ENCODE measurements at regions of chr6 and their contacts with region 1.

Region 1: DNA sequence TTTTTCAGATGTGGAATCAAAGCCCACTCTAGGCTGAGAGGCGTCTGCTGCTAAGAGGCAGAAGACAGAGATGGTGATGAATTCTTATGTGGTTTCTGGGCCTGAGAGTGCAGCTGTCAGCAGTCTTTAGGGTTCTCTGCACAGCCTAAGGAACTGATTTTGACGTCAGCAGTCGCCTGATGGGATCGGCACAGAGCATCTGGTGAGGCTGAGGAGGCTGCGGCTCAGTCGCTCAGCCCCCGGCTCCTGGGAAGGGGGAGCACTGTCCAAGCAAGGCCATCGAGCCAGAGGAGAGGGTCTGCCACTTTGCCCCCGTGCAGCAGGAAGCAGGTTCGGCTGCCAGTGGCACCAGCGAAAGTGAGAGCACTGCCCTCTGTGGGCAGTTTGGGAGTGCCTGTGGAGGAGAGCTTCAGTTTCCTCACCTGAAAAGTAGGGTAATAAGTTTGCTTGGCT is 92.5 kb downstream of the TCP11 start:
- DNase-seq: peak; percentile 42
- ATAC-seq: peak; percentile 43
- H3K4me3 Mint-ChIP-seq: no peak overlapping the region
- H3K27ac Mint-ChIP-seq: no peak overlapping the region
- H3K4me1 Mint-ChIP-seq: no peaks in the 10 kb centered on the region
- H3K27me3 Mint-ChIP-seq: no peaks in the 10 kb centered on the region
- CTCF ChIP-seq: no peak

Region 2: DNA sequence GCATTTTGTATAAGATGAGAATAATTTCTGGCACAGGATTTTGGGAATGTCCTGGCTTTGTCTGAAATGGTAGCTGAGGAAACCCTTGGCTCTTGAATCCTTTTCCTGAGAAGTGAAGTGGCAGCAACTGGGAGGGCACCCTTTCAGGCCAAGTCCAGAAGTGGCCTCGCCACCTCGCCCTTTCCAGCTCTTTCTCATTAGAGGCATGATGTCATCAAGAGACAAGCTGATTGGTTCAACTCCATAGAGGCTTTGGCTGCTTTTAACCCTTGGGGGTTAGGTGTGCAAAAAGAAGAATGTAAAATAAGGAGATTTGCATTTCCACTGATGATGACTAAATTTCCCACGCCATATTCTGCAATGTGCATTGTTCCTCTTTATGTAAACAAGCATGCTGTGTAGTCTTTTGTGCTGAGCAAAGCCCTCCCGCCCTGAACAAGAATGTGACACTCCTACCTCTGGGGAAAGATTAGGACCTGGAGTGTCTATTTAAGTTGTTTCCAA is 24.1 kb before region 1 on chr6:
- CTCF ChIA-PET with region 1: interaction called, 19 read pairs
- POLR2A ChIA-PET with region 1: interaction called, 4 read pairs
- DNase-seq: no peak
- ATAC-seq: peak; percentile 59
- H3K4me3 Mint-ChIP-seq: peak overlapping the region; percentile 35
- H3K27ac Mint-ChIP-seq: peak overlapping the region; percentile 29
- H3K4me1 Mint-ChIP-seq: peaks cover 78% of the 10 kb centered on the region
- H3K27me3 Mint-ChIP-seq: no peaks in the 10 kb centered on the region
- CTCF ChIP-seq: no peak

Region 3: DNA sequence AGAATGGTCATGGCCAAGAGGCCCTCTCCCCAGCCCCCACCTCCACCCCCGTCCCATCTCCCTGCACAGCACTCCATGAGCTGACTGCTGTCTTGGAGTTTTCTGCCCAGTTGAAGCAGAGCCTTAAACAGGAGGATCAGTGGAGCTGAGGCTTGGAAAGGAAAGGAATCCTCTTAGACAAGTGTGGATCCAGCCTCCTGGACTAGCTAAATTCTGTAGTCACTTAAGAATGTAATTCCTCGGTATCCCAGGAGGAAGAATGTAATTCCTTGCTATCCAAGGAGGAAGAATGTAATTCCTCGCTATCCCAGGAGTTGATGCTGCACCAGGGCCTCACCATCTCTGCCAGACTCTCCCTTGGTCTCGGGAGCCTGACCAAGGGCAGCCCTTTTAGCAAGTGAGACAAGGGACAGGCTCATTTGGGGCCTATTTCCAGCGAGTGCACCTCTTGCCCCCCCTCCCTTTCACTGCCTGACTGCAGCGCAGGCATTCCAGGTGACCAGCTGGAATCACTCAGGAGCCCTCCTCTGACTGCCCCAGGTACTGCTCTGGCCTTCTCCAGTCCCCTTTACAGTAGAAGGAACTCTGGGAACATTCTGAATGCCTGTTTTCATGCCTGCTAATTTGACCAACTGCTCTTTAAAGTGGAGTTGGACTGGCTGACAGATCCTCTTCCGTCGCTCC is 16.2 kb after region 1 on chr6:
- CTCF ChIA-PET with region 1: interaction called, 13 read pairs
- POLR2A ChIA-PET with region 1: no interaction called
- DNase-seq: no peak
- ATAC-seq: peak; percentile 74
- H3K4me3 Mint-ChIP-seq: no peak overlapping the region
- H3K27ac Mint-ChIP-seq: peak overlapping the region; percentile 57; the same call in 1 of the 2 replicates
- H3K4me1 Mint-ChIP-seq: peaks cover 19% of the 10 kb centered on the region
- H3K27me3 Mint-ChIP-seq: no peaks in the 10 kb centered on the region
- CTCF ChIP-seq: no peak

Region 4: DNA sequence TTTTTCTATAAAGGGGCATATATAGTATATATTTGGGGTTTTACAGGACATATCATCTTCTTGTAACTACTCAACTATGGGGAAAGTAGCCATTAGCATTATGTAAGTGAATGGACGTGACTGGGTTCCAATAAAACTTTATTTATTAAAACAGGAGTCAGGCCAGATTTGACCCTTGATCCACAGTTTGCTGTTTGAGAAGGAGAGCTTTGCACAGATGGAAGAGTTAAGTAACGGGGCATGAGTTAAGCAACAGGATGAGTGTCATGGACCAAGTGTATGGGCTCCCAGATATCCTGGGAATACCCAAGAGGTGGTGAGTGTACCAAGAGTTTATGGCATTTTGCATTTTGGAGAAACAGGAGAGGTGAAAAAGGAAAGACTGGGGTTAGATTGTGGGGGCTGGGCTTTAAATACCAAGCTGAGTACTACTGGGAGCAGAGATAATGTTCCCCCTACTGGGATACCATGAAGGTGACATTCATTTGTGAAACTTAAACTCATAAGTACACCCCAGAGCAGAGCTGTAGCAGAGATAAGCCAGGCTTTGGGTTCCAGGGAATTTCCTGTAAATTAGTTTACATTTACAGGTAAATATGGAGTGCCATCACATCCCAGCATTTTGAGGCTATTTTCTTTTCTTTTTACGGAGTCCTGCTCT is 146.6 kb after region 1 on chr6:
- CTCF ChIA-PET with region 1: no interaction called
- POLR2A ChIA-PET with region 1: no interaction called
- DNase-seq: no peak
- ATAC-seq: peak; percentile 65
- H3K4me3 Mint-ChIP-seq: no peak overlapping the region
- H3K27ac Mint-ChIP-seq: no peak overlapping the region
- H3K4me1 Mint-ChIP-seq: peaks cover 5% of the 10 kb centered on the region; the same call in 1 of the 2 replicates
- H3K27me3 Mint-ChIP-seq: peaks cover 13% of the 10 kb centered on the region
- CTCF ChIP-seq: no peak

Region 5: DNA sequence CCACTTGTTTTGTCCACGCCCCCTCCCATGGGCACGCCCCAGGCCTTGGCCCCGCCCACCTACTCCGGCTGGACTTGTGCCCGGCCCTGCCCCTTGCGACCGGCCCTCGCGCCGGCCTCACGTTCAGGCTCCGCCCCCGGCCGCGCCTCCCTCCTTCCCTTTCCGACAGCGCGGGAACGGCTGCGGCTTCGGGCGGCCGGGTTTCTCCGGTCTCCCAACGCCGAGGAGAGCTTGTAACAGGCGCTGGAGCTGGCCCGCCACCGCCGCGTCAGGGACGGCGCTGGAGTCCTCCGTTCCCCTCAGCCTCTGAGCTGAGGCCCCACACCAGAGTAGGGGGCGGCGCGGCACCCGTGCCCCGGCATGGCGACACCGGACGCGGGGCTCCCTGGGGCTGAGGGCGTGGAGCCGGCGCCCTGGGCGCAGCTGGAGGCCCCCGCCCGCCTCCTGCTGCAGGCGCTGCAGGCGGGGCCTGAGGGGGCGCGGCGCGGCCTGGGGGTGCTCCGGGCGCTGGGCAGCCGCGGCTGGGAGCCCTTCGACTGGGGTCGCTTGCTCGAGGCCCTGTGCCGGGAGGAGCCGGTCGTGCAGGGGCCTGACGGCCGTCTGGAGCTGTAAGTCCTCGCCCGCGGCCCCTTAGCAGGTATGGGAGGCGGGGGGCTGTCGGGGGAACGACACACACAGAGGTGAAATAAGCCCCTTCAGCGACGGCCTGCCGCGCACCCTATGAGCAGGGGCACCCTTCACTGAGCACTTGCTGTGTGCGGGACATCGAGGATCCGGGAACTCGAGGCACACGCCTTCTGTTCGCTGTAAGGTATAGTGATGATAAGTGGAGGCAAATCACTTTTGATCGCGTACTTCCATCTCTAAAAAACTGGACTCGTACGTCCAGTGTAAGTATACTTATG is 403.8 kb after region 1 on chr6 and contains the start of gene FANCE:
- CTCF ChIA-PET with region 1: no interaction called
- POLR2A ChIA-PET with region 1: no interaction called
- DNase-seq: peak; percentile 100
- ATAC-seq: peak; percentile 95
- H3K4me3 Mint-ChIP-seq: peak within 1 kb of the TSS; percentile 68
- H3K27ac Mint-ChIP-seq: peak within 1 kb of the TSS; percentile 53; the same call in 1 of the 2 replicates
- H3K4me1 Mint-ChIP-seq: peaks cover 34% of the 10 kb centered on the region
- H3K27me3 Mint-ChIP-seq: peaks cover 11% of the 10 kb centered on the region
- CTCF ChIP-seq: no peak
- total RNA-seq, gene FANCE: 15.7 to 22.3 TPM (median 17.6 TPM) in 3 replicates

Measured in WTC11 (cell line).